AG04449 (cell line): ENCODE measurements at regions of chr17 and their contacts with region 1.

Region 1: DNA sequence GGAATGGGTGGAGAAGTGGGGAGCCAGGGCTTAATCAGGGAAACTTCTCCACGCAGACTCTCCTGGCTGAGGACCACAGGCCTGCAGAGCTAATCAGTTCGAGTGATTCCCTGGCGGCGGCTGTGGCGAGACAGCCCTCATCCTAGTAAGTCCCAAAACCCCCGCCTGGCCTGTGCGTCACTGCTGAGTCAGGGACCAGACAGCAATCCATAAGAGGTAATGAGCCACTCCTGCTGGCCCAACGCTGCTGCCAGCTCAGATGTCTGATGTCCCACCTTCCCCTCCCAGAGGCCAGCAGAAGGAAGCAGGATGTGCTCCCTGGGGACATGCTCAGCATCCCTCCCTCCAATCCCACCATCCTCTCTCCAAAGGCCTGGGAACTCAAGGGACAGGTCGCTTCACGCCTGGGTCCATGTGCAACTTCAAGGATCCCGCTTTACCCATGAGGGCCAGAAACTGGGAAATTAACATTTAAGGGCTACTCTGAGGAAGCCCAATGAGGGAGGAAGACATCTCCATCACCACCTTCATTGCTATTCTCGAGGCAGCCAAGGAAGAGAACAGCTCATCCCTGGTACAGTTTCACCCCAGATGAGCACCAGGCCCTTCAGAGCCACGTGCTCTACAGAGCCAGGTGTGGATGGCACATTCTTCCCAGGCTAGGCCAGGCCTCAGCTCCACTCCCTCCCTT is 7.9 kb downstream of the ACLY start:
- DNase-seq: peak; percentile 93
- H3K4me3 ChIP-seq: no peak overlapping the region
- CTCF ChIP-seq: peak; percentile 7

Region 2: GRCh38 chr17:41825175-41825845 is 85.5 kb before region 1 on chr17:
- CTCF ChIA-PET with region 1: no interaction called
- POLR2A ChIA-PET with region 1: no interaction called
- DNase-seq: no peak
- H3K4me3 ChIP-seq: no peak overlapping the region
- CTCF ChIP-seq: no peak

Region 3: GRCh38 chr17:41894791-41895331 is 16.0 kb before region 1 on chr17:
- CTCF ChIA-PET with region 1: interaction called, 3 read pairs
- POLR2A ChIA-PET with region 1: interaction called, 21 read pairs
- DNase-seq: peak; percentile 61
- H3K4me3 ChIP-seq: no peak overlapping the region; the same call in 1 of the 2 replicates
- CTCF ChIP-seq: no peak